IMR-90 (cell line): ENCODE measurements at regions of chr19 and their contacts with region 1.

Region 1: GRCh38 chr19:52527134-52527955 is at the start of gene ZNF808:
- DNase-seq: peak; percentile 87
- ATAC-seq: peak; percentile 98
- H3K4me3 ChIP-seq: peak within 1 kb of the TSS; percentile 93
- H3K27ac ChIP-seq: peak within 1 kb of the TSS; percentile 96
- H3K4me1 ChIP-seq: peaks cover 3% of the 10 kb centered on the region; the same call in 1 of the 2 replicates
- H3K27me3 ChIP-seq: no peaks in the 10 kb centered on the region
- CTCF ChIP-seq: peak; percentile 63
- POLR2A ChIP-seq: peak; percentile 46; the same call in 1 of the 2 replicates
- RAD21 ChIP-seq: peak; percentile 39; the same call in 1 of the 2 replicates
- total RNA-seq, gene ZNF808: 19.9 and 22.8 TPM in 2 replicates

Region 2: DNA sequence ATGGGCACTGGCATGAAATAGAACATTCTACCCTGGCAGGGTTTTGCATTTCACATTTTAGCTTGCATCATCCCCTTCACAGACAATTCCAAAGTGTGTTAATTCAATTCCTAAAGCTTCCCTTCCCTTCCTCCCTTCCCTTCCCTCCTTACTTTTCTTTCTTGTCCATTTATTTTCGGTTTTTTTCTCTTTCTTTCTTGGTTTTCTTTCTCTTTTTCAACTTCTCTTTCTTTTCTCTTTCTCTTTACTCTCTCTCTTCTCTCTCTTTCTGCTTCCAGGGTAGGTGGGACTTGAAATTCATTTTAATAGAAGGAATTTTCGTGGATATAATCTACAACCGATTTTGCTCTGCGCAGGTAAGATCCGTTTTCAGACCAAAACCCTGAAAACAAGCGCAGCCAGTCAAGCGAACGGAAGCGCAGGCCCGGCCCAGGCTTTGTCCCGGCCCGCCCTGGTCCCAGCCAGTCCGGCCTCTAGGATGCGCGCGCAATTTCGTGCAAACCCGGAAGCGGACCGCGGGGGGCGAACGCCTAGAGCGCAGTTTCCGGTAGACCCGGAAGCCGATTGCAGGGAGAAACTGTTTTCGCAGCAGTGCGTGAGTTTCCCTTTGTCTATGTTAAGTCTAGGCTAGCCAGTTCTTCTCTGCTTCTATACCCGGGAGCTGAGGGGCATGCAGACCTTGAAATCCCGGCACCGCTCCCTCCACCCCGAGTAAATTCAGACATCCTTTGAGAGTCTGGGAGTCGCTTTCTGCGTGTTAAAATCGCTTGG is 129.8 kb before region 1 on chr19 and contains the start of gene ZNF528:
- CTCF ChIA-PET with region 1: no interaction called
- POLR2A ChIA-PET with region 1: no interaction called
- dilution Hi-C with region 1: no loop called
- in situ Hi-C with region 1: no loop called
- intact Hi-C with region 1: loop called (anchors 5 kb)
- DNase-seq: peak; percentile 92
- ATAC-seq: peak; percentile 100
- H3K4me3 ChIP-seq: peak within 1 kb of the TSS; percentile 86
- H3K27ac ChIP-seq: peak within 1 kb of the TSS; percentile 83
- H3K4me1 ChIP-seq: no peaks in the 10 kb centered on the region
- H3K27me3 ChIP-seq: no peaks in the 10 kb centered on the region
- CTCF ChIP-seq: no peak
- POLR2A ChIP-seq: peak; percentile 80
- RAD21 ChIP-seq: no peak
- total RNA-seq, gene ZNF528: 14.3 and 16.4 TPM in 2 replicates

Region 3: GRCh38 chr19:52590728-52591127 is 63.4 kb after region 1 on chr19:
- CTCF ChIA-PET with region 1: no interaction called
- POLR2A ChIA-PET with region 1: no interaction called
- dilution Hi-C with region 1: no loop called
- in situ Hi-C with region 1: no loop called
- intact Hi-C with region 1: no loop called
- DNase-seq: no peak
- ATAC-seq: no peak
- H3K4me3 ChIP-seq: no peak overlapping the region
- H3K27ac ChIP-seq: no peak overlapping the region
- H3K4me1 ChIP-seq: no peaks in the 10 kb centered on the region
- H3K27me3 ChIP-seq: no peaks in the 10 kb centered on the region
- CTCF ChIP-seq: no peak
- POLR2A ChIP-seq: no peak
- RAD21 ChIP-seq: no peak